GM23248 (cell line): ENCODE measurements at regions of chr18 and their contacts with region 1.

Region 1: DNA sequence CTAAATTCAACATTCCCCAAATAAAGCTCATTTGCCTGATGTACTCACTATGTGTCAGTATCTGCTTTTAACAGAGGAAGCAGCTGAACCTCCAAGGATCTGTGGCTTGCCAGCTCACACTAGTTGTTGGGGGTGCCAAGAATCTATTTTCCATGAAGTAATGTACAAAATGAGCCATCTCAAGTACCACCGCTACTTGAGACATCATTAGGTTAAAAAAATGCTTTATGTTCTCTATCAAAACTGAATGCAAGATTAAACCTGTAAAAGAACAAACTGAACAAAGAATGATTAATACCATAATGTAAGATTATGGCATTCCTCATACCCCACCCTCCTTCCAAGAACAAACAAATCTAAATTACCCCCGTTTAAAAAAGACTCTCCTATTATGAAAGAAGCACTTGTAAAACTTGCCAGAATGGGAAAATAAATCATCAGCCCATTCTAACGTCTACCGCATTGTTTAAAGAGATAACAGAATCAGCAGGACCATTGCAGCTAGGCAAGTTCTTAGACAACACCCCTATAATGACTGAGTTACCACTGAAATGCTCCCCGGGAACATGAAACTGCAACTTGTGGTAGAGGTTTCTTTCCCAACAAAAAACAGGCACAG is 471.6 kb downstream of the DLGAP1 start:
- DNase-seq: peak; percentile 95
- H3K4me3 ChIP-seq: no peak overlapping the region
- H3K27ac ChIP-seq: peak overlapping the region; percentile 37
- H3K4me1 ChIP-seq: peaks cover 40% of the 10 kb centered on the region
- H3K27me3 ChIP-seq: no peaks in the 10 kb centered on the region

Region 2: DNA sequence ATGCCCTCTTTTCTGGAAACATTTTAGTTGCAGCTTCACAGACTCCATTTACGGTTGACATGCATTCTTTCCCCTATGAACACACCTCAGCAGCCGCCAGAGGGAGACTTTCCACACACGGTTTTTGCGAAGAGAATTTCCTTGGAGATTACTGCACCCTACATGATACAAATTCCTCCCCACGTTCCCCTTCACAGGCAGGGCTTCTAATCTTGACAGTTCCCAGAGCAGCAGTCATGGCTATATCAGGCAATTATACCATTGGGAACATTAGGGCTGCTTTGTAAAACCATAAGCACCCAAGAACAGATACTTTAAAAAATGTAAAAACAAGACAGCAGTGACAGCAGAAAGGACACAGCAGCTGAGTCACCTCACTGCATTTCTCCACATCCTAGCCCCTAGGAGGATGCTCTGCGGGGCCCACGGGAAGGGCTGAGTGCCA is 279.7 kb before region 1 on chr18:
- in situ Hi-C with region 1: loop called (anchors 10 kb)
- DNase-seq: peak; percentile 80
- H3K4me3 ChIP-seq: no peak overlapping the region
- H3K27ac ChIP-seq: no peak overlapping the region
- H3K4me1 ChIP-seq: peaks cover 3% of the 10 kb centered on the region; the same call in 1 of the 2 replicates
- H3K27me3 ChIP-seq: no peaks in the 10 kb centered on the region

Region 3: GRCh38 chr18:3771121-3771971 is 212.1 kb before region 1 on chr18:
- in situ Hi-C with region 1: loop called (anchors 5 kb)
- DNase-seq: peak; percentile 96
- H3K4me3 ChIP-seq: peak overlapping the region; percentile 69
- H3K27ac ChIP-seq: peak overlapping the region; percentile 63
- H3K4me1 ChIP-seq: peaks cover 5% of the 10 kb centered on the region; the same call in 1 of the 2 replicates
- H3K27me3 ChIP-seq: no peaks in the 10 kb centered on the region